HEK293 (cell line): ENCODE measurements at regions of chr2 and their contacts with region 1.

Region 1: DNA sequence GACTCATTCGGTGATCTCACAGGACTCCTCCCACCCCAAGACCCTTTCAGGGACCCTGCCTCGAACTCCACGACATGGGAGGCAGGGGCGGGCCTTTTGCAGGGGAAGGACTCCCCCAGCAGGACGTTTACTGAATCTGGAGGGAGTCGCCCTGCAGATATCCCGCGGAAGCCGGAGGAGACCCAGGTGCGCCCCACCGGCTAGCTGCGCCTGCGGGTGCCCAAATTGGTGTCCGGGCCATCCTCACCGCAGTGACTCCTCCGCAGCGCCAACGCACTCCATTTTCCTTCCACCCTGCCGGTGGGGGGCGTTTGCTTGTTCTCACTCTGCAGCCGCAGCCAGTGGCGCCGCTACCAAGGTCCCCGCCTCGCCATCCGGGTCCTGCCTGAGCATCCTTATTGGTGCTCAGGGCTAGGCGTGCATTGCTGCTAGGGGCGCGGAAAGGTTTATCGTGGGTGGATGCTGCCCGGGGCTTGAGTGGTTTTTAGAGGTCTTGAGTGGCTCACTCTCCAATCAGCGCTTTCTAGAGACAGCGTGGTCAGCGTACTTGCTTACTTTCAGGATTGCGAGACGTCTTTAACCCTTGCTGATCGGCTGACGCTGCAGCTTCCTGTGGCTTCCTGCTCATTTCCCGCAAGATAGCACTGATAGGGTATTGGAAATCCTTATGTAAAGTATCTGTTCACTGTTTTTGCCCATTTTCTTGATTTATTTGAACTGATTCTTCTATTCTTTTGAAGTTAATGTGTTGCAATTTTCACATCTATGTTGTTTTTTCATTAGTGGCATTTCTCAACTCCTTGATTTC is 81.4 kb downstream of the BIN1 start:
- H3K4me3 ChIP-seq: peak overlapping the region; percentile 52
- H3K27ac ChIP-seq: peak overlapping the region; percentile 26; the same call in 1 of the 2 replicates
- H3K4me1 ChIP-seq: no peaks in the 10 kb centered on the region
- CTCF ChIP-seq: peak; percentile 92

Region 2: GRCh38 chr2:126817172-126817571 is 208.4 kb before region 1 on chr2:
- CTCF ChIA-PET with region 1: no interaction called
- POLR2A ChIA-PET with region 1: no interaction called
- H3K4me3 ChIP-seq: no peak overlapping the region
- H3K27ac ChIP-seq: no peak overlapping the region
- H3K4me1 ChIP-seq: no peaks in the 10 kb centered on the region
- CTCF ChIP-seq: no peak

Region 3: GRCh38 chr2:127008265-127009015 is 17.1 kb before region 1 on chr2:
- CTCF ChIA-PET with region 1: no interaction called
- POLR2A ChIA-PET with region 1: no interaction called
- H3K4me3 ChIP-seq: no peak overlapping the region
- H3K27ac ChIP-seq: no peak overlapping the region
- H3K4me1 ChIP-seq: no peaks in the 10 kb centered on the region
- CTCF ChIP-seq: no peak

Region 4: DNA sequence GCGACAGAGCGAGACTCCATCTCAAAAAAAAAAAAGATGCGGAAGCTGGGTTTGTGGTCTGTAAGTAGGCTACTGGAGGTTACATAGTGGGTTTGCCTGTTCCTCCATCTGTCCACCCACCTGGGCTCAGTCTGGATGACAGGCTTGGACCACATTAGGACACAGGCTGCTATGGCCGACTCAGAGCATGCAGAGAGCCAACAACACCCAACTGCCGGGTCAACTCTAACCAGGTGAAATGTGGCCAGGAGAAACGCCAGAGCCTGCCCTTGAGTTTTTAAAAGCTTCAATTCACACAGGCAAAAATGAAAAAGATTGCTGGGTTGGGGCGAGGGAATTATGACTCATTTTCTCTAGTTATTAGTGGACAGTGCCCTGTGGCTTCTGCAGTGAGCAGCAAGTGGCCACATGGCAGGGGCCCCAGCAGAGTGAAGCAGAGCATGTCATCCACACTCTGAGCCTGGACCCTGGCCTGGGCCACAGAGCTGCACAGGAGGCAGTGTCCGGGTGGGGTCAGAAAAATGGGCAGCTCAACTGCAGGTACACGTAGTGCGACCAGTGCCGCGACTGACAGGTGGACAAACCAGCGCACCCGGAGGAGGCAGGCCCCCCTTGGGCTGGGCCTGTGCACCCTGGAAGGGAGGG is 13.9 kb after region 1 on chr2:
- CTCF ChIA-PET with region 1: interaction called, 12 read pairs
- POLR2A ChIA-PET with region 1: no interaction called
- H3K4me3 ChIP-seq: no peak overlapping the region
- H3K27ac ChIP-seq: no peak overlapping the region
- H3K4me1 ChIP-seq: no peaks in the 10 kb centered on the region
- CTCF ChIP-seq: no peak